A549 (cell line): ENCODE measurements at regions of chr2 and their contacts with region 1.

Region 1: DNA sequence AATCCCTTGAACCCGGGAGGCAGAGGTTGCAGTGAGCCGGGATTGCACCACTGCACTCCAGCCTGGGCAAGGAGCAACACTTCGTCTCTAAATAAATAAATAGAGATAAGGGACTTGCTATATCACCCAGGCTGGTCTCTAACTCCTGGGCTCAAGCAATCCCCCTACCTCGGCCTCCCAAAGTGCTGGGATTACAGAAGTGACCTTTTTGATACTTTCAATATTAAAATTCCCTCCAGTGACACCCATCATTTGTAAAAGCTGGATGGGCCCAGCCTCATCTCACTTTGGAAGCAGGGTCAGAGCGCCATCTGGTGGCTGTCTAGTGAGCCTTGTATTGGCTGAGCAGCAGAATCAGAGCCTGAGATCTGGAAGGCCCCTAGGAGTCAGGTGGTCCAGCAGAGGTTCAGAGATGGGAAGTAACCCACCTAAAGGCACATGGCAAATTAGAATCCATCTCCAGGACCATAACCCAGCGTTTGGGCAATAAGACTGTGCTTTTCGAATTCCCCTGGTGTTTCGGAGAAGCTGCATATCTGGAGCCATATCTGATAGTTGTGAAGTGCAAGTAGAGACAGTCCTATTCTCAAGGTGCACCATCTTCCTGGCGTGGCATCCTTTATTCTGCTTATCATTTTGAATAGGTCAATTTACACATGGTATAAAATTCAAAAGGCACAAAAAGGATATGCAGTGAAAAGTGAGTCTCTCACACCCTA is 18.3 kb upstream of the SLC35F6 start:
- DNase-seq: peak; percentile 84 to 88
- ATAC-seq: peak; percentile 89 to 94
- H3K4me3 ChIP-seq: no peak overlapping the region
- H3K27ac ChIP-seq: peak overlapping the region; percentile 53 to 94; a peak in 5 of 6 replicates
- H3K4me1 ChIP-seq: peaks cover 41% of the 10 kb centered on the region
- CTCF ChIP-seq: peak; percentile 99
- EP300 ChIP-seq: no peak
- POLR2A ChIP-seq: no peak
- RAD21 ChIP-seq: peak; percentile 100

Region 2: DNA sequence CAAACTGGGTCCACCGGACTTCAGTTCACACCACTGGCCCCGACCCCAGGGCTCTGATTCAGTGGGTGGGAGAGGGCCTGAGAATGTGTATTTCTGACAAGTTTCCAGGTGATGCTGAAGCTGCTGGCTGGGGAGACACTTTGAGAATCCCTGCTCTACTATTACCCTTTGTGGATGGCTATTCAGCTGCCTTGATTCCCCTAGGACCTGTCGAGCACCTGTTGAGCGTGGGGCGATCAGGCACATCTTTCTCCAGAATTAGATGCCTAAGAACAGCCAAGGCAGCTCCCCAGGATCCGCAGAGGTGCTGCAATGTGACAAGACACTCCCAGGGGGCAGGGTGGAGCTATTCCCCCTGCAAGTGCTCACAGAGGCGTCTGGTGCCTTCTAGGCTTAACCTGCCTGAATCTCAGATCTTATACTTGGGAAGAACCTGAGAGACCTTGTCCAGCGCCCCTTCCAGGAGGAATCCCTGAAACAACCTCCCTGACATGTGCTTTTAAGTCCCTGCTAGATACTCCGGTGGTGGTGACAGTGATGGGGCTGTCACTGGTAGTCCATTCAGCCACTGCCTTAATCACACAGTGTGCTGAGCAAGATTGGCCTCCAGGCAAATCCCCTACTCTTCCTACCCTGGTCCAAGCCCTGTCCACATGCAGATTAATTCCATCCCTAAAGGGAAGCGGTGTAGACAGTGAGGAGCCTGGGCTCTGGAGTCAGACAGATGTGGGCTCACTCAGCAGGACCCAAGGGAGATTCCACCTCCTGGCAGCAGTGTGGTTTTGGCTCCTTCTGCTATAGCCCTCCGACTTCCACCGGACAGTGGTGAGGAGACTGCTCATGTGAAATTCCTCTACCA is 224.5 kb before region 1 on chr2:
- CTCF ChIA-PET with region 1: interaction called, 47 read pairs
- POLR2A ChIA-PET with region 1: no interaction called
- DNase-seq: peak; percentile 69 to 83
- ATAC-seq: peak; percentile 81 to 92
- H3K4me3 ChIP-seq: no peak overlapping the region
- H3K27ac ChIP-seq: no peak overlapping the region
- H3K4me1 ChIP-seq: no peaks in the 10 kb centered on the region
- CTCF ChIP-seq: peak; percentile 61
- EP300 ChIP-seq: no peak
- POLR2A ChIP-seq: no peak
- RAD21 ChIP-seq: peak; percentile 60 to 68

Region 3: GRCh38 chr2:26591619-26592505 is 153.9 kb before region 1 on chr2:
- CTCF ChIA-PET with region 1: interaction called, 19 read pairs
- POLR2A ChIA-PET with region 1: no interaction called
- DNase-seq: no peak
- ATAC-seq: no peak
- H3K4me3 ChIP-seq: no peak overlapping the region
- H3K27ac ChIP-seq: no peak overlapping the region
- H3K4me1 ChIP-seq: 0 out of 3 replicates have a peak, but pooled peaks cover 7% of the 10 kb centered on the region
- CTCF ChIP-seq: no peak
- EP300 ChIP-seq: no peak
- POLR2A ChIP-seq: no peak
- RAD21 ChIP-seq: no peak

Region 4: GRCh38 chr2:26630669-26631360 is 115.0 kb before region 1 on chr2:
- CTCF ChIA-PET with region 1: interaction called, 15 read pairs
- POLR2A ChIA-PET with region 1: no interaction called
- DNase-seq: peak; percentile 64 to 79
- ATAC-seq: peak; percentile 81 to 90
- H3K4me3 ChIP-seq: no peak overlapping the region
- H3K27ac ChIP-seq: peak overlapping the region in 1 of 2 experiments; percentile 61; a peak in 3 of 6 replicates
- H3K4me1 ChIP-seq: peaks cover 11% of the 10 kb centered on the region
- CTCF ChIP-seq: no peak
- EP300 ChIP-seq: no peak
- POLR2A ChIP-seq: no peak
- RAD21 ChIP-seq: no peak

Region 5: DNA sequence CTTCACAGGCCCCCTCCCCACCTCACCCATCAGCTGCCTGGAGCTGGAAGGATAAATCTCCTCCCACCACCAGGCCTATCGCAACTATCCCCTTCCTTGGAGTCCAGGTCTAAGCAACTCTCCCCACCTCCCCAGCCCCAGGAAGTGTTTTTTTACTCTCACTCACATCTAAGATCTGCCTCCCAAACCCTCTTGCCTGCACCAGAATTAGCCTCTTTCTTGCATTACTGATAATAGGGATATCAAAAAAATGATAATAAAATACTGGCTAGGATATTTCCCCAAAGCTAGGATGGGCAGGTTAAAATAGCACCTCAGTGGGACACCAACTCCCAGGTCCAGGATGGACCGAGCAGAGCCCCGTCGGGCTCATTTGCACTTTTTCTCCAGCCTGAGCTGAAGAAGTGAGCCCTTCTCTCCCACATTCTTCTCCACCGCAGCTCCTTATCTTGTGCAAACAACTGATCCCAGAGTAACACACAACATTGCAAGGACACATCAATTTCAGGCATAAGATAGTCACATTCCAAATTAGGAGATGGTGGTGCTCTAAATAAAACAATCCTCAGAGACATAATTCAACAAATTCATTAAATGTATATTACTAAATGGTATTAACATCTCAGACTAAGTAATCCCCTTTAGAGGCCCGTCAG is 86.9 kb before region 1 on chr2:
- CTCF ChIA-PET with region 1: interaction called, 10 read pairs
- POLR2A ChIA-PET with region 1: no interaction called
- DNase-seq: no peak
- ATAC-seq: no peak
- H3K4me3 ChIP-seq: no peak overlapping the region
- H3K27ac ChIP-seq: no peak overlapping the region
- H3K4me1 ChIP-seq: no peaks in the 10 kb centered on the region
- CTCF ChIP-seq: no peak
- EP300 ChIP-seq: no peak
- POLR2A ChIP-seq: no peak
- RAD21 ChIP-seq: no peak

Region 6: GRCh38 chr2:26720322-26721166 is 25.2 kb before region 1 on chr2:
- CTCF ChIA-PET with region 1: interaction called, 47 read pairs
- POLR2A ChIA-PET with region 1: no interaction called
- DNase-seq: peak; percentile 86 to 95
- ATAC-seq: peak; percentile 59 to 67
- H3K4me3 ChIP-seq: no peak overlapping the region
- H3K27ac ChIP-seq: peak overlapping the region; percentile 94
- H3K4me1 ChIP-seq: peaks cover 80% of the 10 kb centered on the region
- CTCF ChIP-seq: no peak
- EP300 ChIP-seq: peak; percentile 43 to 70; a peak in 3 of 5 replicates
- POLR2A ChIP-seq: no peak; the same call in 1 of the 2 replicates
- RAD21 ChIP-seq: 0 out of 5 replicates have a peak, but pooled peaks of 1 of the 2 experiments have one; percentile 34

Region 7: DNA sequence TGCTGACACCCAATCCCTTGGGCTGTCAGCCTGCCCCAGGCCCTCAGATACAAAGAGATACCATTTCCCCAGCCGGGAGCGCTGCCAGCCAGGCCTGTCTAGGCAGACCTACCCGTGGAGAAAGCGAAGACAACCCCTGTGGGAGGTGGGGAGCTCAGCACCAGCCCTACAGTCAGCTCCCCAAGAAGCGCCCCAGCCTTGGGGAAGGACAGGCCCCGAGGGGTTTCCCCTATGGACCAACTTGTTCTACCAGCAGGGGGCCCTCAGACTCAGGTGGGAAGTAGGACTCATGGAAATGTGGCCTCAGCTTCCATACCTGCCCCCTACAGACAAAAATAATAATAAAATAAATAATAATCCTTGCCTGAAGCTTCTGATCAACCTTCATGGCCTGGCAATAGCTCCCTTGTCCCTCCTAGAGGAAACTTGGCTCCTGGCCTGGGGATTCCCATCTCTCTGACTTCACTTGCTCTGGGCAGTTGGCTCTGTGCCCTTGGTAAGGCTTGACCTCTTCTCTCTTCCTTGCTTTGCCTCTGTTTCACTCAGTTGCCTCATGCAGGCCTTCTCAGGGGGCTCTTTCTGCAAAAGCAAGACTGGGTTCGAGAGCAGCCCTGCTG is 25.3 kb after region 1 on chr2:
- CTCF ChIA-PET with region 1: interaction called, 38 read pairs
- POLR2A ChIA-PET with region 1: no interaction called
- DNase-seq: peak; percentile 37 to 78
- ATAC-seq: peak; percentile 28 to 64; a peak in 5 of 6 replicates
- H3K4me3 ChIP-seq: peak overlapping the region; percentile 9; the same call in 1 of the 3 replicates
- H3K27ac ChIP-seq: peak overlapping the region; percentile 85 to 95
- H3K4me1 ChIP-seq: peaks cover 78% of the 10 kb centered on the region
- CTCF ChIP-seq: peak; percentile 50
- EP300 ChIP-seq: peak in 1 of 2 experiments; percentile 47; a peak in 1 of 5 replicates
- POLR2A ChIP-seq: no peak
- RAD21 ChIP-seq: peak in 1 of 2 experiments; percentile 31; a peak in 2 of 5 replicates